GM10248 (cell line): ENCODE measurements at regions of chr7 and their contacts with region 1.

Region 1: GRCh38 chr7:45259966-45260646 is 102.5 kb downstream of the RAMP3 start:
- DNase-seq: peak; percentile 80
- CTCF ChIP-seq: peak; percentile 97

Region 2: DNA sequence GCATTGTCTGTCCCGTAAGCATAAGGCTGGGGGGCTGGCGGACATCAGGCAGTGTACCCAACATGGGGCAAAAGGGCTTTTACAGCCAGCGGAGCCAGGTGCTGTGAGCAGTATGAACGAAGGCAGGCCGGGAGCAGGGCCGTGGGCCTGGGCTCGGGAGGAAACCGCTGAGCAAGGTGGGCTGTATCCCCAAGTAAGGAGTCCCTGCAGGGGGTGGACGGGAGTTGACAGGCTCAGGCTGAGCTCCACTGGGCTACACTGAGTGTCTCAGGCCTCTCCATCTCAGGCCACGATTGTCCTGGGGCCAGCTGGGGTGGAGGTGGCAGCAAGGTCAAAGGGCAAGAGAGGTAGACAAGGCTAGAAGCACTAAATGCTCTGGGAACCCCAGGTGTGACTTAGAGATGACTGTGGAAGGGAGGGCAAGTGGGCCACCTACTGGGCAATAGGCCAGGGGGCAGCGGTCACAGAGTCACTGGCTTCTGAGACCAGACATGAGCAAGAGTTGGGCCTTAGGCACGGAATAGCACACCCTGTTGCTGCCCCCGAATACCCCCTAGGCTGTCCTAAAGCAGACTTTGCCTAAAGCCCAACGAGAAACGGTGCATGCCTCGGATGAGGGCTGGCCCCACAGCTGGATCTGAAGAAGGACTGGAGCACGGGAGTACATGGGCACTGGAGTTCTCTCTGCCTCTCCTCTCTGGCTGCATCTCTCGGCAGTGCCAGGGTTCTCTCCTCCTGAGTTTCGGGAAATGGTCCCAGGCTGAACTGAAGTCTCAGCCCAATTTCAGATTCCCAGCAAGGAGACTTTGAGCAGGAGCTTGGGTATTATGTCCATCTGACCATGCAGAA is 113.4 kb before region 1 on chr7:
- CTCF ChIA-PET with region 1: interaction called, 64 read pairs
- POLR2A ChIA-PET with region 1: no interaction called
- DNase-seq: no peak
- CTCF ChIP-seq: peak; percentile 10

Region 3: DNA sequence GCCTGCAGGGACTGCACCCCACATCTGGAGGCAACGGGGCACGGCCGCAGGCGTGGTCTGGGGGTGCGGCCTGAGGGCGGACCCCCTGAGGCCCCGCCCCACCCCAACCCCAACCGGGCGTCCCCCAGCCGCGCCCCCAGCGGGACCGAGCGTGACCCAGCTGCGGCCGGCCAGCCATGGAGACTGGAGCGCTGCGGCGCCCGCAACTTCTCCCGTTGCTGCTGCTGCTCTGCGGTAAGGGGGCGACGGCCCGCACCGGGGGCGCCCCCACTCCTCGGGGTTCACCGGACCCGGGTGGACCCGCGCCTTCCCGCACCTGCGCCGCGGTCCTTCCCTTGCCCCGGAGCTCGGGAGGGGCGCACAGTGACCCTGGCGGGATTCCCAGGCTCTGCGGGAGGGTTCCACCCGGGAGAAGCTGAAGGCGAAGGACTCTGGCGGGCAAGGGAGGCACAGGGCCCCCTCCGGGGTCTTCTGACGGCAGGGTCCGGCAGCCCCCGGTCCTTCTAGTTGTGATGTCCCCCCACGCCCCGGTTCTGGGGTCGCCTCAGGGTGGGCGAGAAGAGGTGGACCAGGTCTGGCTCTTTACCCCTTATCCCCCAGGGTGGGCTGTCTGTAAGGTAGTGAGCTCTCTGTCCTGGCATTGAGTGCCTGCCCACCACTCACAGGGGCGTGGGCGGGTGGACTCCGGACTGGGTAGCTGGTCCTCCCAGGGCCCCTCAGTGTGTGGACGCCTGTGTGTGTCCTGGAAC is 102.3 kb before region 1 on chr7 and contains the start of gene RAMP3:
- CTCF ChIA-PET with region 1: interaction called, 64 read pairs
- POLR2A ChIA-PET with region 1: no interaction called
- DNase-seq: no peak
- CTCF ChIP-seq: no peak

Region 4: GRCh38 chr7:45219801-45220435 is 40.2 kb before region 1 on chr7:
- CTCF ChIA-PET with region 1: interaction called, 14 read pairs
- POLR2A ChIA-PET with region 1: no interaction called
- DNase-seq: no peak
- CTCF ChIP-seq: no peak

Region 5: GRCh38 chr7:45239486-45239885 is 20.6 kb before region 1 on chr7:
- CTCF ChIA-PET with region 1: interaction called, 10 read pairs
- POLR2A ChIA-PET with region 1: no interaction called
- DNase-seq: no peak
- CTCF ChIP-seq: no peak

Region 6: GRCh38 chr7:45278763-45279398 is 18.8 kb after region 1 on chr7:
- CTCF ChIA-PET with region 1: interaction called, 12 read pairs
- POLR2A ChIA-PET with region 1: no interaction called
- DNase-seq: no peak
- CTCF ChIP-seq: no peak